Calu3 (cell line): ENCODE measurements at regions of chr22 and their contacts with region 1.

Region 1: GRCh38 chr22:30104501-30105156 is 24.4 kb downstream of the HORMAD2 start:
- DNase-seq: no peak
- H3K4me3 Mint-ChIP-seq: no peak overlapping the region
- H3K27ac Mint-ChIP-seq: no peak overlapping the region
- H3K4me1 Mint-ChIP-seq: peaks cover 27% of the 10 kb centered on the region
- H3K27me3 Mint-ChIP-seq: no peaks in the 10 kb centered on the region
- CTCF ChIP-seq: no peak

Region 2: DNA sequence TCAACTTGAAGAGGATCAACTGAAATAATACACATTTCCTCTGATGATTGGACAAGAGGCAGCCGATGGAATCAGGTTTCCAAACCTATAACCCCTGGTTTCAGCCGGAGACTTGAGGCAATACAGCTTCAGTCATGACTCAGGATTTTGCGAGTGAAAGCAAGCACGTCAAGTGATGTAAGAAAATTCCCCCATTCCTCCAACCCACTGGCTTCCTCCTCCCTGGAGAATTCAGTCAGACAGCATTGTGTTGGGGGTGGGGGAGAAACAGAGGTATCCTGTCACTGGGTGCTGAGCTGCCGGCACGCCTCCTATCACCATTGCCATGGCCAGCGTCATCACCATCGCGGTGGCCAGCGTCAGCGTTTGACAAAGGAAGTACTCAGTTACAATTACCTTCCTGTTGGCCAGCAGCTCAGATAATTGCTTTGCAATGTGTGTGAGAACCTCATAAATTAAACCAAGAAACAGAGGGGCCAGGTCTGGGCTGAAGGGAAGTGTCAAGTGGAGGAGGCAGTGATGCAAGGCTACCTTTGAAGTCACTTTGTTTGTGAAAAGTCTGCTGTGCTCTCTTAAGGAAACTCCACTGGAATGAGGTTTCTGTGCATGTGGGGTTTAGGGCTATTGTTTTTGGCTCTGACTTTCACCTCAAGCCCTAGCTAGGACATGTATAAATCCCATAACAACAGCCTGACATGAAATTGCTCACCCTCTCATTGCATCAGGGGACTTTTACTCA is 91.7 kb after region 1 on chr22:
- CTCF ChIA-PET with region 1: interaction called, 5 read pairs
- intact Hi-C with region 1: loop called (anchors 1 kb)
- DNase-seq: peak; percentile 97
- H3K4me3 Mint-ChIP-seq: peak overlapping the region; percentile 28
- H3K27ac Mint-ChIP-seq: peak overlapping the region; percentile 98
- H3K4me1 Mint-ChIP-seq: peaks cover 53% of the 10 kb centered on the region
- H3K27me3 Mint-ChIP-seq: no peaks in the 10 kb centered on the region
- CTCF ChIP-seq: no peak

Region 3: GRCh38 chr22:30212363-30212995 is 107.8 kb after region 1 on chr22:
- CTCF ChIA-PET with region 1: interaction called, 3 read pairs
- intact Hi-C with region 1: loop called (anchors 1 kb)
- DNase-seq: peak; percentile 93
- H3K4me3 Mint-ChIP-seq: no peak overlapping the region
- H3K27ac Mint-ChIP-seq: peak overlapping the region; percentile 99
- H3K4me1 Mint-ChIP-seq: peaks cover 78% of the 10 kb centered on the region
- H3K27me3 Mint-ChIP-seq: no peaks in the 10 kb centered on the region
- CTCF ChIP-seq: no peak

Region 4: GRCh38 chr22:30235687-30236170 is 131.1 kb after region 1 on chr22:
- CTCF ChIA-PET with region 1: interaction called, 6 read pairs
- intact Hi-C with region 1: loop called (anchors 5 kb)
- DNase-seq: peak; percentile 90
- H3K4me3 Mint-ChIP-seq: peak overlapping the region; percentile 15
- H3K27ac Mint-ChIP-seq: peak overlapping the region; percentile 98
- H3K4me1 Mint-ChIP-seq: peaks cover 58% of the 10 kb centered on the region
- H3K27me3 Mint-ChIP-seq: no peaks in the 10 kb centered on the region
- CTCF ChIP-seq: no peak

Region 5: GRCh38 chr22:30253205-30253852 is 148.7 kb after region 1 on chr22:
- CTCF ChIA-PET with region 1: interaction called, 17 read pairs
- intact Hi-C with region 1: no loop called
- DNase-seq: peak; percentile 95
- H3K4me3 Mint-ChIP-seq: peak overlapping the region; percentile 94
- H3K27ac Mint-ChIP-seq: peak overlapping the region; percentile 98
- H3K4me1 Mint-ChIP-seq: peaks cover 70% of the 10 kb centered on the region
- H3K27me3 Mint-ChIP-seq: no peaks in the 10 kb centered on the region
- CTCF ChIP-seq: no peak